PC-3 (cell line): ENCODE measurements at regions of chr6 and their contacts with region 1.

Region 1: DNA sequence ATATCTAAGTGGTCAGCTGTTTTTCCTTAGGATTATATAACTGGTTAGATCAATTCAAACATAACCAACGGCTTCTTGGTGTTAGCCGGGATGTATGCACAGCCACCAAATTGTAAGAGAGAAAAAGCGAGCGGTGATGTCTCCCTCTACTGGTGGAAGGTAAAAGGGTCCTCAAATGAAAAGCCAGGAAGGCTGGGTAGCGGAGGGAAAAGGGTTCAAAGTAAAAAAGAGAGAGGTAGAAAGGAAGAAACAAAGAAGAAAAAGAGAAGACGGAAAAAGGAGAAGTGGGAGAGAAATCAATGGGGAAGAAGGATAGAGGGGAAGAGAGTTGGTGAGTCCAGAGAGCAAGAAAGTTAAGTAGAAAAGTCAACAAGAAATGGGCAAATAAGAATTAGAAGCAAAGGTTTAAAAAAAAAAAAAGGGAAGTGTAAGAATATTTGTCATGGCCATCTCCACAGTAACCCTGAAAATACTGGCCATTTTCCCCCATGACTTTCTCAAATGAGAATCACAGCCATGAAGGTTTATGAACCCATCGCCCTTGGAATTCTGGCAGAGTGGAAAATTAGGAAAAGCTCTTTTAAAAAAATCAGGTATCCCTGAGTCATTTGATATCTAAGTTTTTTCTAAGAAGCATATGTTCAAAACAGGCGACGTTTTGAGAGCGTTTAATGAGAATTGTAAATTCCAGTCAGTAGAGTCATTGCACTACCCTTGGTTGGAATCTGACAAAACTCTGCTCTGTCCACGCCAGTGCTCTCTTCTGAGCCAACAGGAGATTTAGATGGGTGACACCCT is 155.6 kb upstream of the SNX9 start:
- DNase-seq: peak; percentile 68
- ATAC-seq: peak; percentile 82
- H3K4me3 ChIP-seq: no peak overlapping the region
- H3K27ac ChIP-seq: peak overlapping the region; percentile 2; the same call in 1 of the 2 replicates
- H3K4me1 ChIP-seq: peaks cover 17% of the 10 kb centered on the region
- H3K27me3 ChIP-seq: no peaks in the 10 kb centered on the region
- CTCF ChIP-seq: peak; percentile 82

Region 2: GRCh38 chr6:157314705-157315321 is 352.6 kb before region 1 on chr6:
- CTCF ChIA-PET with region 1: no interaction called
- POLR2A ChIA-PET with region 1: no interaction called
- intact Hi-C with region 1: loop called (anchors 1 kb)
- DNase-seq: peak; percentile 75
- ATAC-seq: peak; percentile 66
- H3K4me3 ChIP-seq: no peak overlapping the region
- H3K27ac ChIP-seq: no peak overlapping the region
- H3K4me1 ChIP-seq: peaks cover 14% of the 10 kb centered on the region
- H3K27me3 ChIP-seq: no peaks in the 10 kb centered on the region
- CTCF ChIP-seq: peak; percentile 96

Region 3: DNA sequence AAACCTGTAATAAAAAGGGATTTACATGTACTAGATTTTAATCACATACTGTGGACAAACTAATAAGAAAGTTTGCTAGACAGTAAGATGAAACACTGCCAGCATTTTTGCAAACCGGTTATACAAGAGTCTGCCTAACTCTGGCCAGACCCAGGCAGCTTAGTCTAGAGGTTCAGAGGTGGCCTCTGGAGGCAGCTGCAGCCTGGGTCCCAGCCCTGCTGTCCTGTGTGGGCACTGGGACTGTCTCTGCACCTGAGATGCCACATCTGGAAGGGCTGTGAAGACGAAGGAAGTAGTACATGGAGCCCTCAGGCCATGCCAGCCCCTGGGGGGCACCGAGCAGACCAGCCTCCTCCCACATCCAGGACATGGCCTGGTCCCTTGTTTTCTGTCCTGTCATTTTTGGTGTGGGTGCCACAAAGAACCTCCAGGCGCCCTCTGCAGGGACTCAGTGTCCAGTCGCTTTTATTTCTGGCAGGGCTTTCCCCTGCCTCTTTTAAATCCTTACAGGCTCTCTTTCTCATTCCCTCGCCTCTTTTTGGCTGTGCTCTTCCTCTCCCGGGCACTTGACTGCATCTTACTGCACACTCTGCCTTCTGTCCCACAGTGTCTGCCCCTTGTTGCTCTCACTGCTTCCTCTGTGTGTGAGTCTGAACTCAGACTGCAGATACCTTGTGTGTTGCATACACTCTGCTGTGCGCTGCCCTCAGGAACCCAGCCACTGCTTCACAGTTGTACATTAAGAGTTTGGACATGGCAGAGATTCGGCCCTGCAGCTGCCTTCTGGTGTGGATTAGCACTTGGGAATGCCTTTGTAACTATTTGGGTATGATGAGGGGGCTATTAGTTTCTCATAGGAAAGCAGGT is 69.7 kb before region 1 on chr6:
- CTCF ChIA-PET with region 1: no interaction called
- POLR2A ChIA-PET with region 1: no interaction called
- intact Hi-C with region 1: loop called (anchors 2 kb)
- DNase-seq: peak; percentile 69
- ATAC-seq: peak; percentile 85
- H3K4me3 ChIP-seq: no peak overlapping the region
- H3K27ac ChIP-seq: peak overlapping the region; percentile 20; the same call in 1 of the 2 replicates
- H3K4me1 ChIP-seq: peaks cover 14% of the 10 kb centered on the region
- H3K27me3 ChIP-seq: no peaks in the 10 kb centered on the region
- CTCF ChIP-seq: peak; percentile 67

Region 4: DNA sequence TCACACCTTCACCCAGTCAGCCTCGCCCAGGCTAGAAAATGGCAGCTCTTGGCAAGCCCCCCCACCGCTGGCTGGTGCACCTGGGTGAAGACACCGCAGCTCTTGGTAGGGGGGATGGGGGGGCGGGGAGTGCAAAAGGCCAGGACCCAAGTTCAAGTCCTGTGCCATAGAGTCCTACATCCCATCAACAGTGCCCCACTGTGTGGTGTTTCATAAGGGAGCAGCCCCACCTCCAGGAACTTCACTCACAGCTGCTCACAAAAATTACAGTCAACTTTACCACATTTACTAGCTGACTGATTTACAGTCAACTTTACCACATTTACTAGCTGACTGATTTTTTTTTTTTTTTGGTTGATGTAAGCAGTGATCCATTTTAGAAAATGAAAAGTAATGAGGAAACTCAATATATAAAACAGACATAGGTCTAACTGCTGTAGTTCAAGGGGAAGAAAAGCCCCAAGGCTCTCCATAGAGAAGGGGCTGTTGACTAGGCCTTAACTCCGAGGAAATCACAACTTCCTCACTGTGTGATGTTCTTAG is 53.3 kb before region 1 on chr6:
- CTCF ChIA-PET with region 1: interaction called, 5 read pairs
- POLR2A ChIA-PET with region 1: no interaction called
- intact Hi-C with region 1: loop called (anchors 1 kb)
- DNase-seq: peak; percentile 68
- ATAC-seq: peak; percentile 67
- H3K4me3 ChIP-seq: peak overlapping the region; percentile 67; the same call in 1 of the 2 replicates
- H3K27ac ChIP-seq: peak overlapping the region; percentile 99
- H3K4me1 ChIP-seq: peaks cover 38% of the 10 kb centered on the region
- H3K27me3 ChIP-seq: no peaks in the 10 kb centered on the region
- CTCF ChIP-seq: peak; percentile 47

Region 5: GRCh38 chr6:157644043-157644810 is 23.2 kb before region 1 on chr6:
- CTCF ChIA-PET with region 1: no interaction called
- POLR2A ChIA-PET with region 1: no interaction called
- intact Hi-C with region 1: loop called (anchors 1 kb)
- DNase-seq: peak; percentile 28
- ATAC-seq: peak; percentile 73
- H3K4me3 ChIP-seq: no peak overlapping the region
- H3K27ac ChIP-seq: no peak overlapping the region
- H3K4me1 ChIP-seq: no peaks in the 10 kb centered on the region
- H3K27me3 ChIP-seq: no peaks in the 10 kb centered on the region
- CTCF ChIP-seq: peak; percentile 57

Region 6: DNA sequence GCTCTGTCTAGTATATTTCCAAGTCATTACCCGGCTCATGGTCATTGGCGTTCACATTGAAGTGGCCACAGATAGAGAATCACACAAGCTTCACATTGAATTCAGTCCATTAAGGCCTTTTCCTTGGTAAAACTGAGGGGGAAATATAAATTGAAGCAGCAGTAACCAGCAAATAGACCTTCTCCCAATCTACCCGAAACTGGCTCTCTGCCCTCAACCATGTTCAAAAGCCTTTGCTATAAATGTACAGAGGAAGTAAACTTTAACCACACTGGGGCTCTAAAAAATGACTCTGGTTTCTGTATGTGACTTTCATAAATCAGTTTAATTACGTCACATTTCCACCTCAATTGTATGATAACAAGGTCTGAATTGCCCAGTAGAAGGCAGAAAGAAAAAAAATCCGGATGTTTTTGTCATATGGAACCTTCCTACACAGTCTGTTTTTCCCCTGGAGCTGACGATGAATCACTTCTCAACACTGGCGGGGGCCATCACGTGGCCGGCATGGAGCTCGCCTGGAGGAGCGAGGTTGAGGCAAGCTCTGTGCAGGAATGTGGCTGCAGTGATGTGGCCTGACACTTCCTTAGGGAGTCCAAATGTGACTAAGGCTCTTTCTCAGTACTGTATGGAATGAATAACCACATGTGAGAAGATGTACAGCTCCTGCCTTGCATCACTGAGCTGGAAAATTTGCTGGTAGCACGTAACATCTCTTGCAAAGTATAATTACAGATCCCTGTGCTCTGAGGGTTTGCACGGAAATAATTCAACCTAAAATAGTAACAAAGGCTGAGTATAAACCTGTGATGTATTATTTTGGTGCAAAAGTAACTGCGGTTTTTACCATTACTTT is 97.0 kb after region 1 on chr6:
- CTCF ChIA-PET with region 1: no interaction called
- POLR2A ChIA-PET with region 1: no interaction called
- intact Hi-C with region 1: loop called (anchors 10 kb)
- DNase-seq: peak; percentile 95
- ATAC-seq: peak; percentile 73
- H3K4me3 ChIP-seq: peak overlapping the region; percentile 50; the same call in 1 of the 2 replicates
- H3K27ac ChIP-seq: peak overlapping the region; percentile 88
- H3K4me1 ChIP-seq: peaks cover 61% of the 10 kb centered on the region
- H3K27me3 ChIP-seq: no peaks in the 10 kb centered on the region
- CTCF ChIP-seq: no peak

Region 7: GRCh38 chr6:157893238-157893637 is 225.8 kb after region 1 on chr6:
- CTCF ChIA-PET with region 1: no interaction called
- POLR2A ChIA-PET with region 1: interaction called, 10 read pairs
- intact Hi-C with region 1: no loop called
- DNase-seq: no peak
- ATAC-seq: no peak
- H3K4me3 ChIP-seq: no peak overlapping the region
- H3K27ac ChIP-seq: no peak overlapping the region
- H3K4me1 ChIP-seq: no peaks in the 10 kb centered on the region
- H3K27me3 ChIP-seq: no peaks in the 10 kb centered on the region
- CTCF ChIP-seq: no peak